Vagina (tissue), 2 donors: ENCODE measurements at regions of chr6 and their contacts with region 1.

Region 1: DNA sequence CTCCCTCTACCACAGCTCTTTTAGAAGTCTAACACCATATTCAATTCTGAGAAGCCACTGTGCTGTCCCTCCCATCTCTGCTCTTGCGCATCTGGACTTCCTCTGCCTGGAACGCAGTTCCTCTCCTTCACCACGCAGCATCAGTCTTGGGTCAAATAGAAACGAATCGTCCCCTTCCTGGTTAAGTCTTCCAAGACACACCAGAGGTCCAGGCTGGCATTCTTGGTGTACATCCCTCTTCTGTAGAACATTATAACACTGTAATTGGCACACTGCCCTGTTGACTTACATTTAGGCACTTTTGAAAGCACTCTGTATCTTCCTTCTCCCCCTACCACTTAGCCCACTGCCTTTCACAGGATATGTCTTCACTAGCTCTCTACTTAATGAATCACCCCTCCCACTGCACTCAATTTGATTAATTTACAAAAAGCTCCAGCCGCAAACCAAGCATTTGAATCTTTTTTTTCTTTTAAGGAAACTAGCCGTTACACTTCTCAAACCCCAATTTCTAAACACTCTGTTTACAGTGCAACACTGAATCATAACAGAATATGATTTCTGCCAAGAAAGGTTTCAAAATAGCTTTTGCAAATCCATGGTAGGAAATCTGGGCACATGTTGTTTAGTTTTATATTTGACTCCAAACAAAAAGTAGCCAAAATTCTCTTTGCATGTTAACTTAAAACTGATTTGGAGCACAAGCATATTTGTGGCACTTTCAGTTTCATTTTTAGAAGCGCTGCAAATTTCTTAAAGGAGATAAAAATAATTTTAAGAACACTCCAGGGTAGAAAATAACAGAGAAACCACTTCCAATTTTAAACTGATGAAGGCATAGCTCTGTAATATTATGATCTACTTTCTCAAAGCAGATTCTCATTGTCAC is 140.7 kb upstream of the CARMIL1 start:
- DNase-seq: no peak
- H3K4me3 ChIP-seq: peak overlapping the region; percentile 41 to 52
- H3K27ac ChIP-seq: peak overlapping the region; percentile 91
- H3K4me1 ChIP-seq: peaks cover 19% of the 10 kb centered on the region
- H3K27me3 ChIP-seq: no peaks in the 10 kb centered on the region
- CTCF ChIP-seq: peak in 1 of 3 experiments; percentile 25
- POLR2A ChIP-seq: peak in 1 of 2 donors; percentile 45

Region 2: GRCh38 chr6:25181923-25182322 is 43.4 kb after region 1 on chr6:
- intact Hi-C with region 1: loop called (anchors 10 kb)
- DNase-seq: no peak
- H3K4me3 ChIP-seq: no peak overlapping the region
- H3K27ac ChIP-seq: no peak overlapping the region
- H3K4me1 ChIP-seq: peaks cover 12% of the 10 kb centered on the region
- H3K27me3 ChIP-seq: no peaks in the 10 kb centered on the region
- CTCF ChIP-seq: no peak
- POLR2A ChIP-seq: no peak